CD8-positive, alpha-beta T cell (primary cell): ENCODE measurements at regions of chr4 and their contacts with region 1.

Region 1: DNA sequence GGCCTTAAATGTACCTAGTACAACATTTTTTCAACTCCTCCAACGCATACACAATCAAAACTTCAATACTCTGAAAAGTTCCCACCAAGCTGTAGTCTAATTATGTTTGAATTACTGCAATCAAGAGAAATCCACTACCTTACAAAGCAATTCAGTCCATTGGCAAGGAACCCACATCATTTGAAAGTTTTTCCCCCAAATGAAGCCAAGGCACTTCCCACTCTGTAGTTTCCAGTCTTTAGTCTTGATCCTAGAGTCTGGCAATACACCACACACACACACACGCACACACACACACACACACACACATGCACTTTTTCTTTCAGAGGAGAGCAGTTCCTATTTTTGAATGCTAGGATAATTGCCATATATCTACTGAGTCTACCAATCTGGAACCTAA is 79.6 kb downstream of the ANTXR2 start:
- DNase-seq: no peak
- ATAC-seq: no peak
- H3K4me3 ChIP-seq: no peak overlapping the region
- H3K4me3 Mint-ChIP-seq: no peak overlapping the region
- H3K27ac ChIP-seq: no peak overlapping the region
- H3K27ac Mint-ChIP-seq: no peak overlapping the region
- H3K4me1 ChIP-seq: no peaks in the 10 kb centered on the region
- H3K4me1 Mint-ChIP-seq: peaks cover 38% of the 10 kb centered on the region
- H3K27me3 ChIP-seq: no peaks in the 10 kb centered on the region
- H3K27me3 Mint-ChIP-seq: no peaks in the 10 kb centered on the region
- CTCF ChIP-seq: no peak

Region 2: GRCh38 chr4:79695848-79696247 is 297.6 kb before region 1 on chr4:
- CTCF ChIA-PET with region 1: no interaction called
- POLR2A ChIA-PET with region 1: no interaction called
- intact Hi-C with region 1: no loop called
- DNase-seq: no peak
- ATAC-seq: no peak
- H3K4me3 ChIP-seq: no peak overlapping the region
- H3K4me3 Mint-ChIP-seq: no peak overlapping the region
- H3K27ac ChIP-seq: no peak overlapping the region
- H3K27ac Mint-ChIP-seq: no peak overlapping the region
- H3K4me1 ChIP-seq: no peaks in the 10 kb centered on the region
- H3K4me1 Mint-ChIP-seq: no peaks in the 10 kb centered on the region
- H3K27me3 ChIP-seq: no peaks in the 10 kb centered on the region
- H3K27me3 Mint-ChIP-seq: no peaks in the 10 kb centered on the region
- CTCF ChIP-seq: no peak

Region 3: DNA sequence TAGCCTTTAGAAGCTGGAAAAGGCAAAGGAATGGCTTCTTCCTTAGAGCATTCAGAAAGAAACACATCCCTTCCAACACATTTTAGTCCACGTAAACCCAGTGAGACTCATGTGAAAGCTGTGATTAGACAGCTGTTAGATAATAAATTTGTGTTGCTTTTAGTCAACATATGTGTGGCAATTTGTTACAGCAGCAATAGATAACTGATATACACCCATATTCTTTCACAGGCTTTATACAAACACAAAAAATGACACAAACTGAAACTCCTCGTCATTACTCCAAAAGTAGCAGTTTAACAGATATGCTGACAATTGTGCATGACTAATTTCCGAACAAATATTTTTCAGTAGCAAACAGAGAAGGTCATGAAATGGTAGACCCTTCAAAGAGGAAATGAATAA is 14.3 kb after region 1 on chr4:
- CTCF ChIA-PET with region 1: no interaction called
- POLR2A ChIA-PET with region 1: no interaction called
- intact Hi-C with region 1: loop called in 1 of 2 experiments (anchors 2 kb)
- DNase-seq: peak in 1 of 9 experiments; percentile 2
- ATAC-seq: no peak
- H3K4me3 ChIP-seq: no peak overlapping the region
- H3K4me3 Mint-ChIP-seq: no peak overlapping the region
- H3K27ac ChIP-seq: peak overlapping the region in 1 of 2 experiments; percentile 20
- H3K27ac Mint-ChIP-seq: peak overlapping the region; percentile 42
- H3K4me1 ChIP-seq: peaks cover 11% of the 10 kb centered on the region
- H3K4me1 Mint-ChIP-seq: peaks cover 32% of the 10 kb centered on the region
- H3K27me3 ChIP-seq: no peaks in the 10 kb centered on the region
- H3K27me3 Mint-ChIP-seq: no peaks in the 10 kb centered on the region
- CTCF ChIP-seq: no peak